GM12878 (cell line): ENCODE measurements at regions of chr12 and their contacts with region 1.

Region 1: DNA sequence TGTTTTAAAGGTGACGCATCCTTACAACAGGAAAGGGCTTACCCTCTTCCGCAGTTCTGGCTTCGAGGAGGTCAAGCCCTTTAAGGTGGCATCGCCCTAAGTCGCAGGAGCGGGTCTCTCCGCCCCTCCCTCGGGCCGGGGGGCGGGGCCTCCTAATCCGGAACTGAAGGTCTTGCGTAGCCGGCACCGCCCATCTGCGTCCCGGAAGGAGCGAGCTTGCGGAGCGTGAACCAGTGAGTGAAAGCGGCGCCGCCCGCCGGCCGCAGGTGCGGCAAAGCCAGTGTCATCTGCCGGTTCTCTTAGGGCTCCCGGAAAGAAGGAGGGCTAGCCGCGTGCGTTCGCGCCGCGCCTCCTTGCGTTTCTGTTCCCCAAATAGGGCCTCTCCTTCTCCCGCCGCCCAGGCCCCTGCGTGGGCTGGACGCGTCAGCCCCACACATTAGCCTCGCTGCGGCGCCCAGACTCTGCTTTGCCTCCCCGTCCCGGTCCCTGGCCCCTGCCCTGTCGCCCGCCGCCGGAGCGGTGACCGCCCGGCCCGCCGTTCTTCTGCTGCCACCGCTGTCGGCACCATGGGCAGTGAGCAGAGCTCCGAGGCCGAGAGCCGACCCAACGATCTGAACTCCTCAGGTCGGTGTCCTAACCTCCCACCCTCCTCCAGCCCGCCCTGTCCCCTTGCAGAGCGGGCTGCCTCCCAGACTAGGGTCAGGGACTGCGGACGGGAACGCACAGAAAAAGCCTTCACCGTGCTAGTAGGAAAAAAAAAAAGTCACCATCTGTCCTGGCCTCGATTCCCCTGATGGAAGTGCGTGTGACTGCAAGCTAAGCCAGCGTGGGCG is at the start of gene BORCS5:
- DNase-seq: peak; percentile 94
- ATAC-seq: peak; percentile 92
- H3K4me3 ChIP-seq: peak within 1 kb of the TSS; percentile 71
- H3K27ac ChIP-seq: peak within 1 kb of the TSS; percentile 97
- H3K4me1 ChIP-seq: no peaks in the 10 kb centered on the region
- H3K27me3 ChIP-seq: no peaks in the 10 kb centered on the region
- CTCF ChIP-seq: peak; percentile 2 to 35 (median 24); a peak in 3 of 6 replicates
- EP300 ChIP-seq: peak in 1 of 2 experiments; percentile 59; a peak in 2 of 4 replicates
- POLR2A ChIP-seq: peak; percentile 96
- RAD21 ChIP-seq: no peak
- polyA plus RNA-seq, gene BORCS5: 1.4 to 1.7 TPM

Region 2: GRCh38 chr12:11553871-11554533 is 803.1 kb before region 1 on chr12:
- CTCF ChIA-PET with region 1: no interaction called
- POLR2A ChIA-PET with region 1: interaction called, 11 read pairs
- RAD21 ChIA-PET with region 1: no interaction called
- SMC1A ChIA-PET with region 1: interaction called, 4 read pairs
- in situ Hi-C with region 1: no loop called
- intact Hi-C with region 1: no loop called
- DNase-seq: peak; percentile 88
- ATAC-seq: peak; percentile 87
- H3K4me3 ChIP-seq: no peak overlapping the region
- H3K27ac ChIP-seq: peak overlapping the region; percentile 70
- H3K4me1 ChIP-seq: peaks cover 4% of the 10 kb centered on the region; the same call in 1 of the 2 replicates
- H3K27me3 ChIP-seq: no peaks in the 10 kb centered on the region
- CTCF ChIP-seq: peak; percentile 61 to 77 (median 63)
- EP300 ChIP-seq: peak; percentile 45 to 58; a peak in 2 of 4 replicates
- POLR2A ChIP-seq: no peak
- RAD21 ChIP-seq: peak; percentile 88

Region 3: DNA sequence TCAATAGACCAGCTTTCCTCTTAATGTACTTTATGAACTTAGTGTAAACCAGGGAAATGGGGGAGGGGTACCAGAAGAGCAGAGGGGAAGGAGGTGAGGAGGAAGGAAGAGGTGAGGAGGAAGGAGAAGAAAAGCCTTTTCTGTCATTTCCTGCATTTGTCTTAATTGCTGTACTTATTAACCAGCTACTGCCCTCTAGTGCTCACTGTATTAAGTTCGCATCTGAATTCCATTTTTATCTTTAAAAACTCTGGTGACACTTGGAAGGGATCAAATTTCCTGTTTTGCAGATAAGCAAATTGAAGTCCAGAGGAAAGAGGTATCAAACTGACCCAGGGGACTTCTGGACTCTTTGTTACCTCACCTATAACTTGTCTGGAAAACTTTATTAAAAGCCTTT is 29.3 kb before region 1 on chr12:
- CTCF ChIA-PET with region 1: interaction called, 32 read pairs
- POLR2A ChIA-PET with region 1: interaction called, 4 read pairs
- RAD21 ChIA-PET with region 1: no interaction called
- SMC1A ChIA-PET with region 1: interaction called, 4 read pairs
- in situ Hi-C with region 1: no loop called
- intact Hi-C with region 1: no loop called
- DNase-seq: peak; percentile 25
- ATAC-seq: peak; percentile 74
- H3K4me3 ChIP-seq: no peak overlapping the region
- H3K27ac ChIP-seq: no peak overlapping the region
- H3K4me1 ChIP-seq: no peaks in the 10 kb centered on the region
- H3K27me3 ChIP-seq: no peaks in the 10 kb centered on the region
- CTCF ChIP-seq: peak; percentile 56 to 76 (median 74); a peak in 5 of 6 replicates
- EP300 ChIP-seq: no peak
- POLR2A ChIP-seq: no peak
- RAD21 ChIP-seq: peak; percentile 85

Region 4: DNA sequence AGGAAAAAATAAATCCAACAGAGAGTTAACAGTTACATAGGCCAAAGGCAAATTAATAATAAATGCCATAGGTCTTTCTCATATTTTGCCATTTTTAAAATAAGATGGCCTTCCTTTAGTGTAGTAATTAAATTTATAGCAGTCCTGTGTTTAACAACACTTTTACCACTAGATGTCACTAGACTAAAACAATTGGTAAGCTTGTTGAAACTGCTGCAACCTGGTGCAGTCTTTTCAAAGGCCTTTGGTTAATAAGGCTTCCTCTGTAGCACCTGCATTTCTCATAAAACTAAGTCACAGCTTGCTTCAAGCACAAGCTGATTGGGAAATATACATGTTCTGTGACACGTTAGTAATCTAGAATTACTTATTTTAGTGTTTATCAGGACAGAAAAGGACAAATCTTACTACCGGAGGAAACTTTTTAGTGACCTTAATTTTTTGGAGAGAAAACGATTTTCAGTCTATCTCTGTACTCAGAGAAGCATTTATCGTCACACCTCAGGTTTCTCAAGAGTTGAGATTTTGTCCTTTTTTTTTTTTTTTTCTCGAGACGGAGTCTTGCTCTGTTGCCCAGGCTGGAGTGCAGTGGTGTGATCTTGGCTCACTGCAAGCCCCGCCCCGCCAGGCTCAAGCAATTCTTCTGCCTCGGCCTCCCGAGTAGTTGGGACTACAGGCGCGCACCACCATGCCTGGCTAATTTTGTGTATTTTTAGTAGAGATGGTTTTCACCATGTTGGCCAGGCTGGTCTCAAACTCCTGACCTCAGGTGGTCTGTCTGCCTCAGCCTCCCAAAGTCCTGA is 19.7 kb after region 1 on chr12:
- CTCF ChIA-PET with region 1: interaction called, 6 read pairs
- POLR2A ChIA-PET with region 1: interaction called, 4 read pairs
- RAD21 ChIA-PET with region 1: interaction called, 26 read pairs
- SMC1A ChIA-PET with region 1: interaction called, 13 read pairs
- in situ Hi-C with region 1: no loop called
- intact Hi-C with region 1: no loop called
- DNase-seq: peak; percentile 55
- ATAC-seq: peak; percentile 76
- H3K4me3 ChIP-seq: no peak overlapping the region
- H3K27ac ChIP-seq: no peak overlapping the region; the same call in 1 of the 2 replicates
- H3K4me1 ChIP-seq: peaks cover 6% of the 10 kb centered on the region
- H3K27me3 ChIP-seq: no peaks in the 10 kb centered on the region
- CTCF ChIP-seq: peak; percentile 41 to 81 (median 58); a peak in 5 of 6 replicates
- EP300 ChIP-seq: no peak
- POLR2A ChIP-seq: no peak
- RAD21 ChIP-seq: peak; percentile 98

Region 5: DNA sequence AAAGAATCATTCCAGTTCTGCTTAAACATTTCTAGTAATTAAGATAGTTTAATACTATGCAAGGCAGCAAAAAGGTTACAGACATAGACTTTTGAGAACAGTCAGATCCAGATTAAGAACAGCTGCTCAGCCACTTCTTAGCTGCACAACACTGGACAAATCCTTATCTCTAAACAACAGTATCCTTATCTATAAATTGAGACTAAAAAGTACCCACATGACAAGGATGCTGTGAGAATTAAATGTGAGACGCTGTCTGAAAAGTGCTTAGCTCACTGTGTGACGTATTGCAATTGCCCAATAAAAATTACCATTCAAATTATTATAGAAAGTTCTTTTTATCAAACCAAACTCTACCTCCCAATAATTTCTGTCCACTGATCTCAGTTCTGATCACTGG is 35.3 kb after region 1 on chr12:
- CTCF ChIA-PET with region 1: no interaction called
- POLR2A ChIA-PET with region 1: no interaction called
- RAD21 ChIA-PET with region 1: no interaction called
- SMC1A ChIA-PET with region 1: no interaction called
- in situ Hi-C with region 1: no loop called
- intact Hi-C with region 1: no loop called
- DNase-seq: no peak
- ATAC-seq: no peak
- H3K4me3 ChIP-seq: no peak overlapping the region
- H3K27ac ChIP-seq: no peak overlapping the region
- H3K4me1 ChIP-seq: no peaks in the 10 kb centered on the region
- H3K27me3 ChIP-seq: no peaks in the 10 kb centered on the region
- CTCF ChIP-seq: no peak
- EP300 ChIP-seq: no peak
- POLR2A ChIP-seq: no peak
- RAD21 ChIP-seq: no peak

Region 6: DNA sequence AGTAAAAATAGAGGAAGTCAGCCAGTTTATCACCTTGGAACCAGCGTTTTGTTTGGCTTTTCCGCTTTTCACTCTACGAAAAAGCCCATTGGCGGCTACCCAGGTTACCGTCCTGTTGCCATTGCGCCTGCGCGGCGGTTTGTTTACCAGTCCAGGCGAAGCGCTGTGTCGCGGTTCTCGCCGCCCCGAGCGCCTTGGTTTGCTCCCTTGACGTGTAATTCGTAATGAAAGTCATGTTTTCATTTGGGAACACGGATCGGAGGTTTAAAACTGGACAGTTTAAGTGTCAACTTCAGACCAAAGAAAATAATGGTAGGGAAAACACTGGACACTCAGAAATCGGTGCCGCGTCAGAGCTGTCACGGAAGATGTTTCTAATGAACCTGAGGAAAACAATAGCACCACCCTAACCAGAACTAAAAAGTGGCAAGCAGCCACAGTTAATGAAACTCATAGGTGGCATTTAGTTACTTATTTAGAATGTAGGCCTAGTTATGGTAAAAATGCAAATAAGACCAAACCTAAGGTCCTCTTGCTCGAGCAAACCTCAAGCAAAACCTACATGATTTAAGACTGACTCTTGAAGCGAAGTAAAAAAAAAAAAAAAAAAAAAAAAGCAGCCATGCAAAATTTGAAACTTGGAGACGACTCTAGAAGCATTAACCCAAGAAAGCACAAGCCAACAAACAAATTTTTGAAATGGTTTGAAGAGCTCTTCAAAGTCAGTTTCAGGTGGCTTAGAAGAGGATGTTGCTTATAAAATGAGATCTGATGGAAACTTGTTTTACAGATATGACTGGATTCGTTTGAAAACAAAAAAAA is 339.7 kb after region 1 on chr12:
- CTCF ChIA-PET with region 1: no interaction called
- POLR2A ChIA-PET with region 1: interaction called, 12 read pairs
- RAD21 ChIA-PET with region 1: interaction called, 11 read pairs
- SMC1A ChIA-PET with region 1: interaction called, 13 read pairs
- in situ Hi-C with region 1: no loop called
- intact Hi-C with region 1: loop called (anchors 5 kb)
- DNase-seq: peak; percentile 91
- ATAC-seq: peak; percentile 78
- H3K4me3 ChIP-seq: peak overlapping the region; percentile 77
- H3K27ac ChIP-seq: peak overlapping the region; percentile 99
- H3K4me1 ChIP-seq: peaks cover 35% of the 10 kb centered on the region
- H3K27me3 ChIP-seq: no peaks in the 10 kb centered on the region
- CTCF ChIP-seq: no peak
- EP300 ChIP-seq: peak; percentile 39 to 63; a peak in 2 of 4 replicates
- POLR2A ChIP-seq: peak; percentile 72
- RAD21 ChIP-seq: no peak

Region 7: DNA sequence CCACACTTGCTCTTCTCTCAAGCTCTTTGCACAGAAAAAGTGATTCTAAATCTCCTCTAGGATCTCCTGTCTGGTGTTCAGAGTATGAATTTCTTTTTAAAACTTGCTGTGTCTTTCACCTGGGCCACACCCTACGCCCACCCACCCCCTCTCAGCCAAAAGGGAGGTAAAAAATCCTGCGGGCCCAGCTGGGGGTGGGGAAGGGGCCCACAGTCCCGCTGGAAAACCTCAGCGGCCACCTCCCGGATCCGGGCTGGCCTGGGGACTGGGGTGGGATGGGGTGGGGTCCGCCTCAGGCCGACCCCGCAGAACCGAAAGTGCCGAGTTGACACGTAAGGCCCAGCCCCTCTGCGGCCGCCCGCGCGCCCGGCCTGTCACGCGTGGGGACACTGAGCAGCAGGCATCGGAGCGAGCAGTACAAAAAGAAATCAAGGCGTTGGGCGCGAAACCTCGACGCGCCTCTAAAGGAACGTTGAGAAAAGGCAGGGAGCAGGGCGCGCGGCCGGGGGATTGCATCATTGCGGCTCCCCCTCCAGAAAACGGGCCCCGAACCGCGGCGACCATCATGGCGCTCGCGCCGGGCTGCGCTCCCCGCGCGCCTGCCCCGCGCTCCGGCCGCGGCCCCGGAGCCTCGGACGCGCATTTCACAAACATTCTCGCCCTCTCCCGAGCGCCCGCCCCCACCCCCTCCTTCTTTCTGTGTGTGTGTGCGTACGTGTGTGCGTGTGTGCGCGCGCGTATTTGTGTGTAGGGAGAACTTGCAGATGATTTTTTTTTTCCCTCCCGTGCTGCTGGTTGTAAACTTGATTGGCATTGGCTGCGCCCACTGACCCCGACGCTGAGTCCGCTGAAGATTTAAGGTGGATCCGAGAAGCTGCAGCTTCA is 367.8 kb after region 1 on chr12:
- CTCF ChIA-PET with region 1: interaction called, 4 read pairs
- POLR2A ChIA-PET with region 1: interaction called, 20 read pairs
- RAD21 ChIA-PET with region 1: interaction called, 8 read pairs
- SMC1A ChIA-PET with region 1: interaction called, 5 read pairs
- in situ Hi-C with region 1: no loop called
- intact Hi-C with region 1: no loop called
- DNase-seq: peak; percentile 94
- ATAC-seq: peak; percentile 55
- H3K4me3 ChIP-seq: peak overlapping the region; percentile 97
- H3K27ac ChIP-seq: peak overlapping the region; percentile 97
- H3K4me1 ChIP-seq: peaks cover 14% of the 10 kb centered on the region
- H3K27me3 ChIP-seq: no peaks in the 10 kb centered on the region
- CTCF ChIP-seq: no peak
- EP300 ChIP-seq: no peak
- POLR2A ChIP-seq: peak; percentile 76
- RAD21 ChIP-seq: no peak

Region 8: DNA sequence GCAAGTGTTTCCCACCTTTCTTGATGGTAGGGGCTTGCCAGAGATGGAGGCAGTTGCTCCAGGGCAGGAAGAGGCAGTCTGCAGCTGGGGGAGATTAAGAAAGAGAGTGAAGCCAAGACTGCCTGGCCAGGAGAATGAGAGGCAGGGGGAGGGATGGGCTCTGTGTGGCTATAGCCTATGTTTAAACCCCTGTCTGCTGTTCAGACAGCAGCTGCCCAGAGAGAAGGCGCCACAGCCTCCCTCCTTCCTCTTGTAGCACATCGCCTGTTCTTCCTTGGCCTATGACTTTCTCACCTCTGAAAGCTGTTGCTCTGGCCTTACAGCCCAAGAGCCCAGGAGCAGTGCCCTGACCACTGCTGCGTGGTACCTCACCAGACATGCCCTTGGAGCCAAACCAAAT is 901.1 kb after region 1 on chr12:
- CTCF ChIA-PET with region 1: no interaction called
- POLR2A ChIA-PET with region 1: no interaction called
- RAD21 ChIA-PET with region 1: no interaction called
- SMC1A ChIA-PET with region 1: no interaction called
- in situ Hi-C with region 1: no loop called
- intact Hi-C with region 1: no loop called
- DNase-seq: no peak
- ATAC-seq: no peak
- H3K4me3 ChIP-seq: no peak overlapping the region
- H3K27ac ChIP-seq: no peak overlapping the region
- H3K4me1 ChIP-seq: no peaks in the 10 kb centered on the region
- H3K27me3 ChIP-seq: 0 out of 4 replicates have a peak, but pooled peaks cover 0 to 1% of the 10 kb centered on the region in 2 experiments
- CTCF ChIP-seq: no peak
- EP300 ChIP-seq: no peak
- POLR2A ChIP-seq: no peak
- RAD21 ChIP-seq: no peak